Activated T-helper 1 cell treated with anti-CD3 and anti-CD28 coated beads, Interleukin-12 subunit alpha, Interleukin-12 subunit beta, Interleukin-2, Interleukin-4 antibody, amounts not matched to agents 30 ng/mL and 10 ng/mL and 1 ng/mL, durations not matched to agents 14 hours and 24 hours and 36 hours (primary cell): ENCODE measurements at regions of chr19 and their contacts with region 1.

Region 1: DNA sequence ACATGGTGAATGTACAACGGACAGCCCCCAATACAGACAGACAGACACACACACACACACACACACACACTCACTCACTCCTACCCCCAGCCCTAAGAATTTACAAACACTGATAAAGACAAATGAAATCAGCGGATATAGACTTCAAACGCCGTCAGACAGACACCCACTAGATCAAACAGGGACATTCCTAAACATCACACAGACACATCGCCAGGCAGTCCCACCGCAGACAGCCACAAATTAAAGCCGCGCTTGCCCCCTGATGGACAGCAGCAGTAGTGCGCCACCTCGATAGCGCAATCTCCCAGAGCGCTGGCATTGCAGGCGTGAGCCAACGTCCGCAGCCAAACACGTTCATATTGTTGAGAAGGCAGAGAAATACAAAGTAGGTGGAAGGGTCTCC is 24.7 kb upstream of the ADGRE1 start:
- DNase-seq: peak; percentile 86
- H3K4me3 Mint-ChIP-seq: peak overlapping the region; percentile 79
- H3K27ac Mint-ChIP-seq: peak overlapping the region; percentile 74
- H3K4me1 Mint-ChIP-seq: peaks cover 13% of the 10 kb centered on the region
- H3K27me3 Mint-ChIP-seq: no peaks in the 10 kb centered on the region

Region 2: DNA sequence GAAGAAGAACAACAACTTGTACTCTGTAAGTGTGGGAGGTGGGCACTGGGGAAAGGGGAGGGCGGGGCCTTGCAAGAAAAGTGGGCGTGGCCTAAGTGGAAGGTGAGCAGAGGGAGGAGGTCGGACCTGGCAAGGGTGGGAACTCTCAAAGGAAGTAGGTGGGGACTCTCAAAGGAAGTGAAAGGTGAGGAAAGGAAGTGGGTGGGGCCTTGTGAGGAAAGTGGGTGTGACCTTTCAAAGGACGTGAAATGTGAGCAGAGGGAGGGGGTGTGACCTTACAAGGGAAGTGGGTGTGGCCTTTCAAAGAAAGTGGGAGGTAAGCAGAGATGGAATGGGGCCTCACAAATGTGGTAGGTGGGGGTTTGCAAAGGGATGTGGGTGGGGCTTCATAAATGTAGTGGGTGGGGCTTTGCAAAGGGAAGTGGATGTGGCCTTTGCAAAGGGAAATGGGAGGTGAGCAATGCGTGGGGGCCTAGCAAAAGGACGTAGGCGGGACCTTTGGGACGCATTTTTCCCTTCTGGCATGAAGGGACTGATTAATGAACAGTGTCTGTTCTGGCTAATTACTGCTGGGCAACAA is 701.3 kb before region 1 on chr19:
- intact Hi-C with region 1: loop called (anchors 1 kb)
- DNase-seq: peak; percentile 60
- H3K4me3 Mint-ChIP-seq: peak overlapping the region; percentile 37
- H3K27ac Mint-ChIP-seq: peak overlapping the region; percentile 55
- H3K4me1 Mint-ChIP-seq: peaks cover 11% of the 10 kb centered on the region
- H3K27me3 Mint-ChIP-seq: no peaks in the 10 kb centered on the region

Region 3: DNA sequence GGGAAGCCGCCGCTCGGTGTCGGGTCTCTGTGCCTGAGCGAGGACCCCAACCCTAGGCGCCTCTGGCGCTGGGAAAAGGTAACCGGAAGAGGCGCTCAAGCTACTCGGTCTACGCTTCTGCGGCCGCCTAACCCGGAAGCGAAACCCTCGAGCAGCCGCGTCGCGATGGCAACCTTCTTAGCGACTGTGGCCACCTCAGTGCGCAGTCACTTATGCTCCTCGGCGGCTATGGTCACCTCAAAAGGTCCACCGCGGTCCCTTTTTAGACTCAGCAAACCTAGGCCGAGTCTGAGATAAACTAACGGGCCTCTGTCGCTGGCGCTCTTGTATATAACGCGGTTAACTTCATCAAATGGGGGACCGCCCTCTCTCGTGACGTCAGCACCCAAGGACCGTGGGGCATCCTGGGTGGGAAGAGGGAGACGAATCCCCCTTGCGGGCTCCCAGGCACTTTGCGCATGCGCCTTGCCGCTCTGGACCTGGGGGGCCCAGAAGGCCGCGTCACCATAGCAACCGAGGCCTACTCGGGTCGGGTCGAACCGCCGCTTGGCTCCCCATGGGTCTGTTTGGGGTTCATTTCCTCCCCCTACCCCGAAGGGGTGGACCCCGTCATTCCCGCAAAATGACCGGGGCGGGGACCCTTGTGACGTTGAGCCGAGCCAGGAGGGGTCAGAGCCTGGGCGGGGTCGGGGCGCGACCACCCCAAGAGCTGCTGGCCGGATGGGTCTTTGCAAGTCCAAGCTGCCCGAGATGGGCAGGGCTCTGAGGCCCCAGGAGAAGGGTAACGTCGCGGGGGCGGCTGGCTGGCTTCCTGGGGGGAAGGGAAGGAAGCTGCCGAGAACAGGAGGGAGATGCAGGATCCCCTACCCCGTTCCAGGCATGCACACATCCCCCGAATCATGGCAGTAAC is 469.3 kb before region 1 on chr19 and contains the start of gene GTF2F1:
- intact Hi-C with region 1: loop called (anchors 1 kb)
- DNase-seq: peak; percentile 87
- H3K4me3 Mint-ChIP-seq: peak within 1 kb of the TSS; percentile 98
- H3K27ac Mint-ChIP-seq: peak within 1 kb of the TSS; percentile 97
- H3K4me1 Mint-ChIP-seq: peaks cover 29% of the 10 kb centered on the region
- H3K27me3 Mint-ChIP-seq: no peaks in the 10 kb centered on the region
- total RNA-seq, gene GTF2F1: 62.9 and 65.5 TPM in 2 replicates

Region 4: DNA sequence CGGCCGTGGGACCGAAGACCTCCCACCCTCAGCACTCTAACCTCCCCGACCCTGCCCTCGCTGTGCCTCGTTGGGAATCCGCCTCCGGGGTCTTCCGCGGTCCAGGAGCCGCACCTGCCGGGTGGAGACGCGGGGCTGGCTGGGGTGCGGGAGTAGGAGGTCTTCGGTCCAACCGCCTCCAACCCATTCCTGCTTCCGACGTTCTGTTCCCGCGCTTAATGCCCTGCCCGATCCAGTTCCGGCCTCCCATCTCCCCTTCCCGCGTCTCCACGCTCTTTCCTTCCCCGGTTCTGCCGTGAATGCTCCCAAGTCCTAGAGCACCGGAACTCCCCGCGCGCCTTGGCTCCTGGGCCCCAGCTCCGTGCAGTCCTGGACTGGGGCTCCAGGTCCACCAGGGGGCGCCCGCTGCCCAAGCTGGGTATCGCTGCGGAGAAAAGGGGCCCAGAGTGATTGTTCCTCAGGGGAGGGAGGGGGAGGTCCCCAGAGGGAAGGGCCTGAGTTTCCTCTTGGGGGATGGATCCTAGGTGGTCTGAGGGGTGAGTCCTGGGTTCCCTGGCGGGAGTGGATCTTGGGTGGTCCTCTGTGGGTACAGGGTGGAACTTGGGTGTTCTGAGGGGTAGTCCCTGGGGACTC is 345.9 kb before region 1 on chr19:
- intact Hi-C with region 1: loop called (anchors 1 kb)
- DNase-seq: peak; percentile 86
- H3K4me3 Mint-ChIP-seq: peak overlapping the region; percentile 96
- H3K27ac Mint-ChIP-seq: peak overlapping the region; percentile 93
- H3K4me1 Mint-ChIP-seq: peaks cover 34% of the 10 kb centered on the region
- H3K27me3 Mint-ChIP-seq: peaks cover 2% of the 10 kb centered on the region

Region 5: GRCh38 chr19:6632002-6632621 is 230.6 kb before region 1 on chr19:
- intact Hi-C with region 1: loop called (anchors 1 kb)
- DNase-seq: peak; percentile 76
- H3K4me3 Mint-ChIP-seq: no peak overlapping the region
- H3K27ac Mint-ChIP-seq: no peak overlapping the region
- H3K4me1 Mint-ChIP-seq: peaks cover 29% of the 10 kb centered on the region
- H3K27me3 Mint-ChIP-seq: peaks cover 4% of the 10 kb centered on the region

Region 6: DNA sequence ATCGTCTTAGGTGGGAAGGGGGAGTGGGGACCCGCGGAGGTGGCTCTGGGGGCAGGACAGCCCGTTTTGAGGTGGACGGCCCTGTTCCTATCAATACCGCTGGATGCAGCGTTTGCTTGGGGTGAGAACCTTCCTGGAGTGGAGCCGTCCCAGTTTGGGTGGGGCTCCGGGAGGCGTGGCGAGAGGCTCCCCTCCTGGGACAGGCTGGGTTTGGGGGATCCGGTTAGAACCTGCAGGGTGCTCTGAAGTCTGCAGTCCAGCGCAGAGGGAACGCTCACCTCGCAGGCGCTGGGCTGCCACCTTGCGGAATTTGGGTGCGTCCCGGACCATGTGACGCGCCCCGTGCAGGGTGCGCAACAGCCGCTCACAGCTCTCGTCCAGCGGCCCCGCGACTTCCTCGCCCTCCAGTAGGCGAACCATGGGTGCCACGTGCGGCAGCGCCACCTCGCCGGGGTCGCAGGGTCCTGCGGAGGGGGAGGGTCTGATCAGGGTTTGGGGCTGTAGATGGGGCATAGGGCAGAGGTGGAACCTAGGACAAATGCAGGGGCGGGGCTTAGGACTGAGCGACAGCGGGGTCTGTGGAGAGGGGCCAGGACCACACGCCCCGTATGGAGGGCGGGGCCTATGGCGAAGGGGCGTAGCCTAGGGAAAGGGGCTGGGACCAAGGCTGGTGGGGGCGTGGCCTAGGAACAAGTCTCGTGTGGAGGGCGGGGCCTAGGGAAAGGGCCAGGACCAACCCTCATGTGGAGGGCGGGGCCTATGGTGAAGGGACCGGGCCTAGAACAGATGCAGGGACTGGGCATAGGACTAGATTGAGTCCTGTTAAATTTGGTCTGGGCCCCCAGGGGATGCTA is 109.3 kb before region 1 on chr19:
- intact Hi-C with region 1: loop called (anchors 1 kb)
- DNase-seq: peak; percentile 76
- H3K4me3 Mint-ChIP-seq: peak overlapping the region; percentile 75
- H3K27ac Mint-ChIP-seq: peak overlapping the region; percentile 88
- H3K4me1 Mint-ChIP-seq: peaks cover 19% of the 10 kb centered on the region
- H3K27me3 Mint-ChIP-seq: no peaks in the 10 kb centered on the region

Region 7: GRCh38 chr19:6794686-6795431 is 67.8 kb before region 1 on chr19:
- intact Hi-C with region 1: no loop called
- DNase-seq: no peak
- H3K4me3 Mint-ChIP-seq: no peak overlapping the region
- H3K27ac Mint-ChIP-seq: no peak overlapping the region
- H3K4me1 Mint-ChIP-seq: peaks cover 72% of the 10 kb centered on the region
- H3K27me3 Mint-ChIP-seq: no peaks in the 10 kb centered on the region

Region 8: DNA sequence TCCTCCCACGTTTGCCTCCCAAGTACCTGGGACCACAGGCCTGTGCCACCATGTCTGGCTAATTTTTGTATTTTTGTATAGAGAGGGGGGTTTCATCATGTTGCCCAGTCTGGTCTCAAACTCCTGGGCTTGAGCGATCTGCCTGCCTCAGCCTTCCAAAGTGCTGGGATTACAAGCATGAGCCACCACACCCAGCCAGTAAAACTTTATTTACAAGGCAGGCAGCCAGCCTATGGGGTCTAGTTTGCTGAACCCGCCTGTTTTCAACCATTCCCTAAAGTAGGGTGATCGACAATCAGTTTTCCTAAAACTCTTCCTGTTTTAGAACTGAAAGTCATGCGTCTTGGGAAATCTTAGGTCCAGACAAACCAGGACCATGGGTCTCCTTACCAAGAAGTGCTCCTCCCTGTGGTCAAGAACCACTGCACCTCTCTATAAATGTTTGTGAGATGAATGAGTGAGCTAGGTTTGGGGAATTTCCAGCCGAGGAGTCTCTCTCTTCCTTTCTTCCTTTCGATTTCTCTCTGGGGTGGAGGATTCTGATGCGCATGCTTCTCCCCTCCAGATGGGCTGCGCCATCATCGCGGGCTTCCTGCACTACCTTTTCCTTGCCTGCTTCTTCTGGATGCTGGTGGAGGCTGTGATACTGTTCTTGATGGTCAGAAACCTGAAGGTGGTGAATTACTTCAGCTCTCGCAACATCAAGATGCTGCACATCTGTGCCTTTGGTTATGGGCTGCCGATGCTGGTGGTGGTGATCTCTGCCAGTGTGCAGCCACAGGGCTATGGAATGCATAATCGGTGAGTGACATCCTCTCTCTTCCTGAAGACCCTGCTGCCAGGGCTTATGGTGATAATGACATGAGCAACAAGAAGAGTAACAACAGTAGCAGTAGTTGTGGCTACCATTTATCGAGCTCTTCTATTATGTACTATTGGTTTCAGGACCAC is 63.4 kb after region 1 on chr19:
- intact Hi-C with region 1: no loop called
- DNase-seq: peak; percentile 50
- H3K4me3 Mint-ChIP-seq: peak overlapping the region; percentile 78
- H3K27ac Mint-ChIP-seq: peak overlapping the region; percentile 79
- H3K4me1 Mint-ChIP-seq: peaks cover 23% of the 10 kb centered on the region
- H3K27me3 Mint-ChIP-seq: peaks cover 2% of the 10 kb centered on the region

Region 9: DNA sequence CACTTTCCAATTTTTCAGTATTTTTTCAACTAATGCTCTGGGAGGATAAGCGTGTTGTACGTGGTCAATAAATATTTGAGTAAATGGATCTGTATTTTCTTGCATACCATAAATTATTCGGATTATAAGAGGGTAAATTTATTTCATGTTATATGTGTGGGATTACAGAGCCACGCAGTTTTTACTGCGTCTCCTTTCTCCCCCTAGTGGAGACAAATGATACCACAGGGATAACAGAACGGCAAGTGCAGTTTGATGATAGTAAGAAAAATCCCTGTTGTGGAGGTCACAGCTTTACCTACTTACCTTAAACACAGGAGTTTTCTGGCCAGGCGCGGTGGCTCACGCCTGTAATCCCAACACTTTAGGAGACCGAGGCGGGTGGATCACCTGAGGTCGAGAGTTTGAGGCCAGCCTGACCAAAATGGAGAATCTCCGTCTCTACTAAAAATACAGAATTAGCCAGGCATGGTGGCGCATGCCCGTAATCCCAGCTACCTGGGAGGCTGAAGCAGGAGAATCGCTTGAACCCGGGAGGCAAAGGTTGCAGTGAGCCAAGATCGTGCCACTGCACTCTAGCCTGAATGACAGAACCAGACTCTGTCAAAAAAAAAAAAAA is 141.7 kb after region 1 on chr19:
- intact Hi-C with region 1: loop called (anchors 1 kb)
- DNase-seq: no peak
- H3K4me3 Mint-ChIP-seq: no peak overlapping the region
- H3K27ac Mint-ChIP-seq: no peak overlapping the region
- H3K4me1 Mint-ChIP-seq: peaks cover 16% of the 10 kb centered on the region
- H3K27me3 Mint-ChIP-seq: no peaks in the 10 kb centered on the region

Region 10: DNA sequence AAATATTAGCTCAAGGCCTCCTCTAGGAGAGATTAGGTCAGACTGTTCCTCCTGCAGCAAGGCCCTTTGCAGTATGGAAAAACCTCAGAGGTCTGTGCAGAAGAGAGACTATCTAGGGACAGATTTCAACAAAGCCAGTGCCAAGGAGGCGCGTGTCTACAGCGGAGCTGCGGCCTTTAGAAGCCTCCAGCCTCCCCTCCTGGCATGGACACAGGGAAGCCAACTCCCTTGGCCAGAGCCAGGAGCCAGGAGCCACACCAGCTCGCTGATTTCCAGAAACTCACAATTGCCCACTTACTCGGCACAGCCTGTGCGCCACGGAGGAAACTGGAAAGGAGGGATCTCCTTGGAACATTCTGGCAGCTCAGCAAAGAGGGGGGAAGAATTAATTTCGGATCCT is 368.1 kb after region 1 on chr19:
- intact Hi-C with region 1: no loop called
- DNase-seq: no peak
- H3K4me3 Mint-ChIP-seq: no peak overlapping the region
- H3K27ac Mint-ChIP-seq: no peak overlapping the region
- H3K4me1 Mint-ChIP-seq: no peaks in the 10 kb centered on the region
- H3K27me3 Mint-ChIP-seq: no peaks in the 10 kb centered on the region